Cardiac septum (tissue), 1 donor: ENCODE measurements at regions of chr2 and their contacts with region 1.

Region 1: GRCh38 chr2:196076778-196077568 is 8.3 kb upstream of the DNAH7 start:
- DNase-seq: no peak

Region 2: DNA sequence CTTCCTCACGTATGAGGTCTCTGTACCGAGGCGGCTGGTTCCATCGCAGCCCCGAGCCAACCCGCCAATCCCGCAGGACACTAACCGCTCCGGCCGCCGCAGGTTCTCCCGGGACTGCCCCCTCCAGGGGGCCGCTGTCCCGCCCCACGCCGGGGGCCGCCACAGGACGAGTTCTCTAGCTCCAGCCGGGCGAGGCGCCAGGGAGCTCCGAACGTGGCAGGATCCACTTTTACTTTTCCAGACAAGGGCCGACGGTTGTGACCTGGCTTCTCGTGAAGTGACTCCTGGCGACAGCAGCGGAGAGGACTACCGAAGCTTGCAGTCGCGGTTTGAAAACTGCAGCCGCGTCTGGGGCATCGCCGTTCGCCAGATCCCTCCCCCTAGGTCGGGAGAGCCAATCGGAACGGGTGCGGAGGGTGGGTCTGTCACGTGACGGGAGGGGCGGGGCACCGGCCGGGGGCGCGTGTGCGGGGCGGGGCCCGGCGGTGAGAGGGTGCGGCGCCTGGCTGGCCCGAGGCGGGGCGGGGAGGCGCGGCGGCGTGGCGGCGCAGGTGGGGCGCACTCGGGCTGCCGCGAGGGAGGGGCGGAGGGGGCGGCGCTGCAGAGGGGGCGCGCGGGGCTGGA is 94.4 kb after region 1 on chr2 and contains the start of gene STK17B:
- intact Hi-C with region 1: loop called (anchors 5 kb)
- DNase-seq: peak; percentile 98
- total RNA-seq, gene STK17B: 4.0 TPM

Region 3: DNA sequence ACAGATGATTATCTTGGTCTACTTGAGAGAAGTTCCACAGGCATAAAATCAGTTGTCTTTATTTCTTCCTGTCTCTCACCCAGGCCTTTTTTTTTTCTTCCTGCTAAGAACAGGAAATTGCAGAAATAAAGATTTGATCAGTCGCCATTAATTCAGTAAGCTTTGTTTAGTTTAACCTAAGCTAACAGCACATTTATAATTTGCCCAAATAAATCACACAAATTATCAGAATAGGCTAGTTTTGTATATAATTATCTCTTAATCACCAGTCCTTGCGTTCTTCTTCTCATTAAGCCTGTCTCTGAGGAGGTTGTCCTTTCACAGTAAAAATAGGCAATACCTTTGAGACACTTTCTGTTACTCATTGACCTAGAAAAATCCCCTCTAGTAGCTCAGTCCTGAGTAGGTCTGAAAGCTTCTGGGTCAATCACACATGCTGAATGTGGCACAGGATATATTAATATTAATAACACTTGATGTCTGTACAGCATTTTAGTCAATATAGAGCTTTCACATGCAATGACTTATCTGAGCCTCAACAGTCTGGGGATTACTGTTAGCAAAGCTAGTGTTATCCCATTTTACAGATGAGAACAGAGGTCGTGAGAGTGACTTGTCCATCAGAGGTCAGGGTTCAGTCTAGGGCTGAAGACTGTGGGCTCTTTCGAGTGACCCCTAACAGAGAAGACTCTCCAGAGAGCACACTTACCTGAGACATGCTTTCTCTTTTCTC is 105.6 kb after region 1 on chr2:
- intact Hi-C with region 1: no loop called
- DNase-seq: no peak

Region 4: GRCh38 chr2:196284144-196284844 is 207.3 kb after region 1 on chr2:
- intact Hi-C with region 1: loop called (anchors 5 kb)
- DNase-seq: no peak

Region 5: DNA sequence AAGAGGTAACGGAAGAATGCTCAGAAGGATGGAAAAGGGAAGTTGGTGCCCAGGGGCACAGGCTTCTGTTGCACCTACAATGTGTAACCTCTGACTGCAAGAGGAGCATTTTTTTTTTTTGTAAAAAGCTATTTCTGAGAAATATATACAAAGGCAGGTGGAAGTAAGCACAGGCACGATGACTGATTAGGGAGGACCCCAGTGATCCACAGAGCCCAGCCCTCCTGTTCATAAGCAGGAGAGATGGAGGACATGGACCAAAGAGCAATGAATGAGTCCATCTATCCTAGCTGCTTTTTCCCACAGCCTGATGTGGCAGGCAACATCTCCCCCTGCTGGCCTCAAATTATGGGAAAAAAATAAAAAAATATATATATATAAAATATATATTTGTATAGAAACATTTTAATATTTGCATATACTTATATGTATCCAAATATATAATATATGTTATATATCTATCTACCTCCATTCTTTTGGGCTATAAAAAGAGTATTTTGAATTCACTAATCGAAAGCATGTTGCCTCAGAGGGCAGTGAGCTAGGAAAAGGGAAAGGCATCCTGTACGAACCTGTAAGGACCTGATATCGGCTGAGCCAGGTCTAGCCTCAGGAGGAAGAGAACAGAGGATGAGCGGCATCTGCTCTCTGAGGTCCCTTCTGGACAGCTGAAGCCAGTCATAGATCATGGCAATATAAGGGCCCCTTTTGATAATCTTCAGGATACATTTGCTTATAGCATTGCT is 260.4 kb after region 1 on chr2:
- intact Hi-C with region 1: loop called (anchors 5 kb)
- DNase-seq: no peak

Region 6: GRCh38 chr2:196453613-196454047 is 376.7 kb after region 1 on chr2:
- intact Hi-C with region 1: loop called (anchors 10 kb)
- DNase-seq: no peak

Region 7: DNA sequence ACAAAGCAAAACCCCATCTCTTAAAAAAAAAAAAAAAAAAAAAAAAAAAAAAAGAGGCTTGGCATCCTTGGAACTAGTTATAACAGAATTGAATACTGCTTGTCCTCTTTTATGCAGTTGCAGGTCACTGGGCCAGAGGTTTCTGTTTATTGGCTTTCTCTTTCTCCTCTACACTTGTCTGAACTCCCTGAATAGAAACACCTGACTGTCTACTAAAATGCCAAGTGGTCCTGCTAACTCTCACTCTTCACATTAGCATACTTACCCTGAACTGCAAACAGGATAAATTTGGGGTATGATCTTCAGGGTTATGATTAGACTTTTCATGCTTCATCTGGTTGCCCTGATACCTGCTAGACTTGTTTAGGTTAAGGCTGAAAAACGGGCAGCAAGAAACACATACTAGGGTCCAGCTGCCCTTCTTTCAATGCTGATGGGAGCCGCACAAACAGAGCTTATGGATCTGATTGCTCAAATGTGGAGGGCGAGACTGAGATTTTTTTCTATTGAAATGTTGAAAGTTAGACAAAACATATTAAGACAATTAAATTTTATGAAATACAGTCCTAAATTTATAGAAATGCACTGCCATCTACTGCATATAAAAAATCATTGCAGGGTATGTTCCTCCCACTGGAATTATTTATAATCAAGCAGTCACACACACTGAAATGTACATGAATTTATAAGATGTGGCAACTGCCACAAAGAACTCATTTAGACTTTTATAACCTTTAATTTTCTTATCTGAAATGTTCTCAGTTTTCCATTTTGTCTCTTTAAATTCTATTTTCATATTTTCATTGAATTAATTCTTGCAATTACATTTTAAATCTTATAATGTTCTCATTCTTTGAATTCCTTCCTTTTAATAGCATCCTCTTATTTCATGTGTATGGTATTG is 681.8 kb after region 1 on chr2:
- intact Hi-C with region 1: loop called (anchors 5 kb)
- DNase-seq: no peak